AG04449 (cell line): ENCODE measurements at regions of chr16 and their contacts with region 1.

Region 1: GRCh38 chr16:75647492-75648264 is at the starts of genes KARS1 and TERF2IP:
- DNase-seq: peak; percentile 56
- H3K4me3 ChIP-seq: peak within 1 kb of the TSS; percentile 98
- CTCF ChIP-seq: no peak

Region 2: DNA sequence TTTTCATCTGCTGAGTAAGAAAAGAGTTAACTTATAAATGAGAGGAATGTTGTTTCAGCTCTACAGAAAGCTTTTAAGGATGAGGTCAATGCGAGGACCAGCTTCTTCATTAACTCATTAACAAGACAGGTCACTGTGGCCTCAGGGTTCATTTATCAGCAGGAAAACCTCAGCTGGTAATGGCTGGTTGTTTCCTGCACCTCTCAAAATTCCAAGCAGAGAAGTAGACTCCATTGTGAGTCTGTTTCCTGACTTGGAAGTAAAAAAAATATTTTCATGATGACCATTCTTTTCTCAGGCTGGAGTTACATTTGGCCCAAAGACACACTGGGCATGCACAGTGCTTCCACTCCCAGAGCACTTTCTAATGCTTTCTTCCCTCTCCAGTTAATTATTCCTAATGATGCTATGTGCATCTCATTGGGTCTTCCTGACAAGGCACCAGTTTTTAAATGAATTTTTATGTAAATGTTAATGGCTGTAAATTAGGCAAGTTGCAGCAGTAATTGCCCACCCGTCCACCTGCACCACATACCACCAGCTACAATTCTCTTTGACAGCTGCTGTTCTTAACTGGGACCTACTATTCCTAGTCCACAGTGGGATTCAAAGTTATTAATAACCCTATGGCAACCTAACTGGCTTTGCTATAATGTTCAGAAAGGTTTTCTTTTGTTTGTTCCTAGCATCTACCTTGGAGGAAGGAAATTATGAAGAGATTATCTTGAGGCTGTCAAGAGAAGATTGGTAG is 306.8 kb before region 1 on chr16:
- CTCF ChIA-PET with region 1: no interaction called
- POLR2A ChIA-PET with region 1: no interaction called
- DNase-seq: no peak
- H3K4me3 ChIP-seq: no peak overlapping the region
- CTCF ChIP-seq: no peak

Region 3: GRCh38 chr16:75622761-75623605 is 24.7 kb before region 1 on chr16 and contains the start of gene ADAT1:
- CTCF ChIA-PET with region 1: interaction called, 17 read pairs
- POLR2A ChIA-PET with region 1: interaction called, 4 read pairs
- DNase-seq: peak; percentile 87
- H3K4me3 ChIP-seq: peak within 1 kb of the TSS; percentile 86
- CTCF ChIP-seq: no peak

Region 4: DNA sequence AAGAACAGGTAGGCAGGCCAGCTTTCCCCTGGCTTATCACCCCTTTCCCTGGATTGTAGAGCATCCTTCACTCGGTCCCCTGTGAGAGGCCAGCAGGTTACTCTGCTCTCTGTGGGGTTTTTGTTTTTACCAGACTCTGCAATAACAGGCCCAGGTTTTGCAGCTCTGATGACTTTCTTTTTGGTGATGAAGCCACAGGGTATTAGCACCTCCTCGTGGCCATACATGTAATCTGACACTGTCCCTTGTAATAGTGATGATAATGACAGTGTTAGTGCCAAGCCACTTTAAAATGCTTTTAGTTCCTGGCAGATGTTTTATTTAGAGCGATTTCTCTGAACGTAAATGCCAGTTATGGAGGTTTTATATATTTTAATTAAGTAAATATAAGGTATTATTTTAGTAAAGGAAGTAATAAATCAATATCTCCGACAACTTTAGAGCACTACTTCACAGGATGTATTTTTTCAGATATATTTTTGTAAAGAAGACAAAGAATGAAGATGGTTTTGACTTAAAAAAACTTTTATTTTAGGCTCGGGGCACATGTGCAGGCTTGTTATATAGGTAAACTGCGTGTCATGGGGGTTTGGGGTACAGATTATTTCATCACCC is 116.6 kb after region 1 on chr16:
- CTCF ChIA-PET with region 1: interaction called, 14 read pairs
- POLR2A ChIA-PET with region 1: no interaction called
- DNase-seq: peak; percentile 24
- H3K4me3 ChIP-seq: no peak overlapping the region
- CTCF ChIP-seq: peak; percentile 69